Activated B cell treated with CpG ODN at 0.5 μM for 24 hours (primary cell): ENCODE measurements at regions of chr10 and their contacts with region 1.

Region 1: GRCh38 chr10:27558612-27559020 is 54.5 kb downstream of the RAB18 start:
- DNase-seq: no peak
- ATAC-seq: no peak
- H3K4me3 Mint-ChIP-seq: no peak overlapping the region
- H3K27ac Mint-ChIP-seq: no peak overlapping the region
- H3K4me1 Mint-ChIP-seq: no peaks in the 10 kb centered on the region
- H3K27me3 Mint-ChIP-seq: no peaks in the 10 kb centered on the region
- CTCF ChIP-seq: no peak

Region 2: GRCh38 chr10:27525819-27526218 is 32.8 kb before region 1 on chr10:
- CTCF ChIA-PET with region 1: no interaction called
- POLR2A ChIA-PET with region 1: no interaction called
- intact Hi-C with region 1: no loop called
- DNase-seq: no peak
- ATAC-seq: no peak
- H3K4me3 Mint-ChIP-seq: no peak overlapping the region
- H3K27ac Mint-ChIP-seq: no peak overlapping the region
- H3K4me1 Mint-ChIP-seq: peaks cover 30% of the 10 kb centered on the region
- H3K27me3 Mint-ChIP-seq: no peaks in the 10 kb centered on the region
- CTCF ChIP-seq: no peak

Region 3: DNA sequence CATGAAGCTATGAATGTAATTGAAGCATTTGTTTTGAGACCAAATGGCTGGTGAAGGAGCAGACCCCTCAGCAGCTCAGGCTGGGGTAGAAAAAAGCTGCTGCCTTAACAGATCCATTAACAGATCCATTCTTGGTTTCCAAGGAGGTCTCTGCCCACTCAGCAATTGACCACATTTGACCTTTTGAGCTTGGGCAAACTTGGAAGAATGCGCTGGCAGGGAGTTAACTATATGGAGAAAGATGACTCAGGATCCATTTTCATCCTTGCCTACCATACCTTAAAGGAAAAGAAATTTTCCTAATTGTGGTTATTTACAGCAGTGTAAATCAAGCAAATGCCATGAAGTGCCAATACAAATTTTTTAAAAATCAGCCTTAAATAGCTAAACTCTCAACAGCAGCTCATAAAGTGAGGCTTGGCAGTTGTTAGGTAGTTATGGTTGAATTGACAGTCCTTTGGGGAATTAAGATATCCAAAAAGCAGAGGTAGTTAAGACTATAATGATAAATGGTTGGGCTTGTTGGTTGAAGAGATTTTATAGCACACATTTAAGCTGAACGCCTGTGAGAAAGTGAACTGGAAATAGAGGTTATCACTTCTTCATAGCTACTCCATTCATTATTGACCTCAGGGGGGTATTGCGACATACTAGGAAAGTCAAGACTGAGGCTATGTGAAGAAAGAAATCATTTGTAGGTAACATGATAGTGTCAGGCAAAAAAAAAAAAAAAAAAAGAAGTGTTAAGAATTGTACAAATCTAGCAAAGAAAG is 103.1 kb after region 1 on chr10:
- CTCF ChIA-PET with region 1: no interaction called
- POLR2A ChIA-PET with region 1: no interaction called
- intact Hi-C with region 1: loop called (anchors 1 kb)
- DNase-seq: no peak
- ATAC-seq: no peak
- H3K4me3 Mint-ChIP-seq: no peak overlapping the region
- H3K27ac Mint-ChIP-seq: no peak overlapping the region
- H3K4me1 Mint-ChIP-seq: no peaks in the 10 kb centered on the region
- H3K27me3 Mint-ChIP-seq: peaks cover 15% of the 10 kb centered on the region
- CTCF ChIP-seq: no peak

Region 4: DNA sequence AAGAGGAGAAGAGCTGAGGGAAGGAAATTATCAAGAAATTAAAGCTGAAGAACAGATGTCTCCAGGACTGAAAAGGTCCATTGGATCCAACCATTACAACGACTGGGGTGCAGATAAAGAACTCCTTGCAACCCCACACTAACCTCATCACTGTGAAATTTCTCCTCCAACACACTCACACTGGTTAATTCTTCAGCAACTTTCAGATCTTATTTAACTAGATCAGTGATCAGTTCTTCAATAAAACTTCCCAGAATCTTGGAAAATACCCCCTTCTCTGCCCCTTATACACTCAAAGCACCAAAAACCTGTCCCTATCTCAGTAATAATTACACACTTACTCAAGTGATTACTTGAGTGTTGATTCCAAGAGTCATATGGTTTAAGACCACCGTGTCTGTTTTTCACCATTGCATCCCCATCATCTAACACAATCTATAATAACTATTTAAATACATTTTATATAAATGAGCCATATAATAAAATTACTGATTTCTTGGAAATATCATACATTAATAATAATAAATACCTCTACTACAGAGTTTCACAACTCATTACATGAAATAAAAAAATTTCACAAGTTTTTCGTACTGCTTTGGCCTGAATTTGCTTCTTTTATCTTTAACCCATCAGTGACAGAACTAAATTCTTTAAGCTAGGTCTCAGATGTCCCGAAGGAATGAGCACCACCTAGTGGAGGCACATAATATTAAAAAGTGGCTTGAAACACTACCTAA is 620.6 kb after region 1 on chr10:
- CTCF ChIA-PET with region 1: interaction called, 4 read pairs
- POLR2A ChIA-PET with region 1: no interaction called
- intact Hi-C with region 1: loop called (anchors 1 kb)
- DNase-seq: no peak
- ATAC-seq: peak; percentile 64
- H3K4me3 Mint-ChIP-seq: no peak overlapping the region
- H3K27ac Mint-ChIP-seq: no peak overlapping the region
- H3K4me1 Mint-ChIP-seq: peaks cover 15% of the 10 kb centered on the region
- H3K27me3 Mint-ChIP-seq: no peaks in the 10 kb centered on the region
- CTCF ChIP-seq: peak; percentile 88

Region 5: DNA sequence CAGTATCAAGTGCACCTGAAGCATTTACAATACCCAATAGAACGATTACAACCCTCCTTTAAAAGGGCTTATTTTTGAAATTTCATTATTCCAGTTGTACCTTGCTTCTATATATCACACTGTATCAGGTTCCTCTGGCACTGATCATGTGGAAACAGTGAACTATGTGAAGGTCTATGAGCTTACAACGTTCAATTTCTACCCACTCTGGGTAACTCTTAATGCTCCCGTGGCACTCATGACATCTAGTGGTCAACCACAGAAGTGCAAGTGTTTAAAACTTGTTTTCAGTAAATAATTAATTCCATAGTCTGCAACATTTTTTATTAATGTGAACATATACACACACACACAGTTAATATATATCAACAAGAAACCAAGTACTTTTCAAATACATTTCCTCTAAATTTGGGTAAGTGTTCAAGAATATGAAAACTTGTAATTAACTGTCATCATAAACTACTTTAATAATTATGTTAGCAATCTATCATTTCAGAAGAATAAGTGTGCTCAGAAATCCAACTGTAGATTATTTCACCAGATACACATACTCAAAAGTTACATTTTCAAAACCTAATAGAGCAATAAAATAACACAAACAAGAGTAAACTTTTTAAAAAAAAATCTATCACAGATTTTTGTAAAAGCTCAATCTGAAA is 683.3 kb after region 1 on chr10:
- CTCF ChIA-PET with region 1: interaction called, 10 read pairs
- POLR2A ChIA-PET with region 1: no interaction called
- intact Hi-C with region 1: loop called (anchors 1 kb)
- DNase-seq: no peak
- ATAC-seq: peak; percentile 72
- H3K4me3 Mint-ChIP-seq: no peak overlapping the region
- H3K27ac Mint-ChIP-seq: no peak overlapping the region
- H3K4me1 Mint-ChIP-seq: no peaks in the 10 kb centered on the region
- H3K27me3 Mint-ChIP-seq: peaks cover 13% of the 10 kb centered on the region
- CTCF ChIP-seq: no peak

Region 6: DNA sequence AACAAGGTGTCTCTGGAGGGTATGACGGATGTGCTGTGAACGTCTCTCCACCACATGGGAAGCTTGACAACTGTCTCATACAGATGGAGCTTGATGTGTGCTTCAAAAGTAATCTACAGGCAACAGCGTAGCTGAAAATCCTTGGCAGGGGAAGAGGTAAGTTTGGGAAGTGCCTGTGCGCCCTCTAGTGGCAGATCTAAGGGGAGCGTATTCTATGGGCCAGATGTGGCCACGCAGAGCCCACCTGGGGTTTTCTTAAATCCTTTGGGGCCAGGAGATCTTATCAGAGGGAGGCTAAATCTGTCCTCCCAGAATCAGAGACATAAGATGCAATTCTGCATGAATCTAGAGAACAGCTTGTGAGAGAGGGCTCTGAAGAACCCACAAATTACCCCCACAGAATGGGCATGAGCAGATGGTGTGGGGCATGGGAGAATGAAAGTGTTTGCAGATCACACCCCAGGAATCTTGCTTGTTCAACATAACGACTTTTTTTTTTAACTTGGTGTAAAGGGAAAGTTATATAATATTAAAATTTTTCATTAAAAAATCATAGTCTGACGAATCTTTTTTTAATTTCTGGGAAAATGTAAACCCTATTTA is 835.5 kb after region 1 on chr10:
- CTCF ChIA-PET with region 1: no interaction called
- POLR2A ChIA-PET with region 1: no interaction called
- intact Hi-C with region 1: loop called (anchors 1 kb)
- DNase-seq: peak; percentile 30
- ATAC-seq: peak; percentile 56
- H3K4me3 Mint-ChIP-seq: no peak overlapping the region
- H3K27ac Mint-ChIP-seq: no peak overlapping the region
- H3K4me1 Mint-ChIP-seq: peaks cover 4% of the 10 kb centered on the region
- H3K27me3 Mint-ChIP-seq: peaks cover 4% of the 10 kb centered on the region
- CTCF ChIP-seq: peak; percentile 85